Spleen (tissue), 13 donors: ENCODE measurements at regions of chr15 and their contacts with region 1.

Region 1: GRCh38 chr15:37995461-37996347 is 61.3 kb downstream of the TMCO5A start:
- DNase-seq: no peak
- H3K4me3 ChIP-seq: no peak overlapping the region
- H3K27ac ChIP-seq: no peak overlapping the region
- H3K4me1 ChIP-seq: peaks cover 0 to 8% (median 2%) of the 10 kb centered on the region in 6 donors
- H3K27me3 ChIP-seq: no peaks in the 10 kb centered on the region
- CTCF ChIP-seq: peak in 9 of 11 experiments; percentile 37 to 82 (median 49)
- POLR2A ChIP-seq: no peak

Region 2: GRCh38 chr15:38050529-38051448 is 55.1 kb after region 1 on chr15:
- intact Hi-C with region 1: no loop called
- DNase-seq: no peak
- H3K4me3 ChIP-seq: no peak overlapping the region
- H3K27ac ChIP-seq: peak overlapping the region in 5 of 8 donors; percentile 36 to 63 (median 47)
- H3K4me1 ChIP-seq: peaks cover 0 to 12% (median 3%) of the 10 kb centered on the region in 6 donors
- H3K27me3 ChIP-seq: no peaks in the 10 kb centered on the region
- CTCF ChIP-seq: no peak
- POLR2A ChIP-seq: no peak

Region 3: GRCh38 chr15:38354315-38354929 is 358.7 kb after region 1 on chr15:
- intact Hi-C with region 1: loop called (anchors 5 kb)
- DNase-seq: no peak
- H3K4me3 ChIP-seq: no peak overlapping the region
- H3K27ac ChIP-seq: no peak overlapping the region
- H3K4me1 ChIP-seq: no peaks in the 10 kb centered on the region
- H3K27me3 ChIP-seq: no peaks in the 10 kb centered on the region
- CTCF ChIP-seq: peak; percentile 61 to 82 (median 76)
- POLR2A ChIP-seq: no peak